Endothelial cell of umbilical vein (primary cell): ENCODE measurements at regions of chr1 and their contacts with region 1.

Region 1: DNA sequence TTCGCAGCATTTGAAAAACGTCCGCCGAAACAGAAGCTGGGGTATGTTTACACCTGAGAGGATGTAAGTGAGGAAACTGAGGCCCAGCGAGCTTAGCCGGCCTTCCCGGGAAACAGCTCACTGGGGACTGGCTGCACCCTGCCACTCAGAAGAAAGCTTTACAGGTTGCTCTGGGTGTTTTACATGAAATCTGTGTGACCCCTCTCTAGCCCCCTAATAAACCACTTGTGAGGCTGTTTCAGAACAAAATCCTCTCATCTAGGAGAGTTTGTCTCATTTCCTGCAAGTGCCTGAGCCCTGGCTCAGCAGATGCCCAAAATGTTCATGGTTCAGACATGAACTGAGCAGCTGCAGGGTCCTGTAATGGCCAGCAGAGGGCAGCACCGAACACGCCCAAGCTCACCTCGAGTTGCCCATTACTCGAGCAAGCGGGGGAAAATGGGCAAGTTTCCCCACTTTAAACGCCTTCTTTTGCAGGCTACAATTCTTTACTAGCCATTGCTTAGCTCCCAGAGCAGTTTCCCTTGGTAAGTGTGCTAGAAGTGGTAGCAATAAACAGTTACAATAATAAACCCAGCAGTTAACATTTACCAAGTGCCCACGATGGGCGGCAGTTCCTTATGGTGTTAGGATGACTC is 76.4 kb downstream of the FHAD1 start:
- DNase-seq: peak; percentile 73
- H3K4me3 ChIP-seq: no peak overlapping the region
- H3K27ac ChIP-seq: no peak overlapping the region
- H3K4me1 ChIP-seq: peaks cover 5% of the 10 kb centered on the region
- H3K27me3 ChIP-seq: no peaks in the 10 kb centered on the region
- CTCF ChIP-seq: peak; percentile 97 to 98
- POLR2A ChIP-seq: no peak

Region 2: DNA sequence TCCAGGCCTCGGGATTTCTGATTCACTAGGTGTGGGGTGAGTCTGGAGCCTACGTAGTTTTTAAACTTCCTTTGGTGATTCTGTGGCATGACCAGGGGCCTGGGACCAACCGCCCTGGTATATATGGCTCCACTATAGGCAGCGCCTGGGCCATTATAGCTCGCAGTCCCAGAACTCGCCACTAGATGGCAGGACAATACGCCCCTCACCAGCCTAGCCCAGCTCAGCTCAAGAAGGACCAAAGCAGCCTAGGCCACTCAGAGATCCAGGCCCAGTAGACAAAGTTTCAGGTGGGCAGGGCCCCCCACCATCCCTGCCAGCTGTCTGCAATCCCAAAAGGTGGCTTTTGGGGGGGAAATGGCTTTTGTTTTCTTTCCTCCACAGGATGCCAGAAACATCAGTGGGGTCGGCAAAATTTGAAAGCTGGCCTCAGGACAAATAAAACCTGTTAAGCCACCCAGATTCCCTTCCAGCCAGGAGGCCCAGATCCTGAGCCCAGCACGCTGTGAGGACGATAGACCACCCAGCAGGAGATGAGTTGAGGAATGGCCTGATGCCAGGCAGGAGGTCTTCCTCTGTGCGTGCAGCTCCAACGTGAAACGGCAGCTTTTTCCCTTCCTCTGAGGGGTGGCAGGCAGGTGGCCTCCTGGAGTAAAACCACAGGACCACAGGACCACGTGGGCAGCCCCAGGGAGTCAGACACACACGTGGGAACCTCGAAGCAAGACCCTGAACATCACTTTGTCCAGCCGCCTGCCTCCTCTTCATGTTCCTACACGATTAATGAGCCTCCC is 194.8 kb before region 1 on chr1:
- CTCF ChIA-PET with region 1: interaction called, 14 read pairs
- POLR2A ChIA-PET with region 1: no interaction called
- dilution Hi-C with region 1: no loop called
- intact Hi-C with region 1: no loop called
- DNase-seq: peak; percentile 78
- H3K4me3 ChIP-seq: no peak overlapping the region
- H3K27ac ChIP-seq: no peak overlapping the region
- H3K4me1 ChIP-seq: no peaks in the 10 kb centered on the region
- H3K27me3 ChIP-seq: no peaks in the 10 kb centered on the region
- CTCF ChIP-seq: peak; percentile 92
- POLR2A ChIP-seq: no peak

Region 3: DNA sequence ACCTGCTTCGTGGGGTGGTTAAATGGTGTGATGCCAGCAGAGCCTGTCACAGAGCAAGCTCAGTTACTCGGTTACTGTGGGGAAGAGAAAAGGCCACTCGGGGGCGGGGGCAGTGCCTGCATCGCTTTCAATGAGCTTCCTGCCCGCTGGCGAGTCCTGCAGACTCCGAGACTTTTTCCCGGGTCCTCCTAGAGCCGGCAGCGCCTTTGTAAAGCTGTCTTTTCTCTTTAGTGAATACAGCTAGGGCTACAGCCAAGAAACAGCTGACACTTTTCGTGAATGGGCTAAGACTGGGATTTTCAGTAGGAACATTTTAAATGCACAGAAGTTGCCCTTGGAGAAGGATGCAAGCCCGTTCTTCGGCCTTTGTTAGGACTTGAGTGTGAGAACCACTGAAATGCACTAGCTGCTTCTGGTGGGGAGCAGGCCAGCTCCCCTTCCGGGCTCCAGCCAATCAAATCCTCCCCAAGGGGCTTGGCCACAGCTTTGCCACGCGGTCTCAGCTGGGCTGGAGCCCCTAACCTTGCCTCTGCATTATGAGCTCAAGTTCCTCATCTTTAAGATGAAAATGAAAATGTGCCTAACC is 62.8 kb after region 1 on chr1:
- CTCF ChIA-PET with region 1: interaction called, 13 read pairs
- POLR2A ChIA-PET with region 1: no interaction called
- dilution Hi-C with region 1: no loop called
- intact Hi-C with region 1: no loop called
- DNase-seq: no peak
- H3K4me3 ChIP-seq: no peak overlapping the region
- H3K27ac ChIP-seq: no peak overlapping the region
- H3K4me1 ChIP-seq: no peaks in the 10 kb centered on the region
- H3K27me3 ChIP-seq: peaks cover 0 to 3% of the 10 kb centered on the region in 2 experiments
- CTCF ChIP-seq: no peak
- POLR2A ChIP-seq: no peak

Region 4: GRCh38 chr1:15417365-15417934 is 94.0 kb after region 1 on chr1:
- CTCF ChIA-PET with region 1: interaction called, 31 read pairs
- POLR2A ChIA-PET with region 1: interaction called, 4 read pairs
- dilution Hi-C with region 1: loop called (anchors 10 kb)
- intact Hi-C with region 1: loop called (anchors 1 kb)
- DNase-seq: peak; percentile 78
- H3K4me3 ChIP-seq: no peak overlapping the region
- H3K27ac ChIP-seq: peak overlapping the region; percentile 48
- H3K4me1 ChIP-seq: peaks cover 56% of the 10 kb centered on the region
- H3K27me3 ChIP-seq: no peaks in the 10 kb centered on the region
- CTCF ChIP-seq: no peak
- POLR2A ChIP-seq: peak; percentile 48

Region 5: GRCh38 chr1:15436881-15437442 is 113.5 kb after region 1 on chr1:
- CTCF ChIA-PET with region 1: interaction called, 332 read pairs
- POLR2A ChIA-PET with region 1: no interaction called
- dilution Hi-C with region 1: no loop called
- intact Hi-C with region 1: no loop called
- DNase-seq: no peak
- H3K4me3 ChIP-seq: no peak overlapping the region
- H3K27ac ChIP-seq: no peak overlapping the region
- H3K4me1 ChIP-seq: no peaks in the 10 kb centered on the region
- H3K27me3 ChIP-seq: no peaks in the 10 kb centered on the region
- CTCF ChIP-seq: no peak
- POLR2A ChIP-seq: no peak

Region 6: DNA sequence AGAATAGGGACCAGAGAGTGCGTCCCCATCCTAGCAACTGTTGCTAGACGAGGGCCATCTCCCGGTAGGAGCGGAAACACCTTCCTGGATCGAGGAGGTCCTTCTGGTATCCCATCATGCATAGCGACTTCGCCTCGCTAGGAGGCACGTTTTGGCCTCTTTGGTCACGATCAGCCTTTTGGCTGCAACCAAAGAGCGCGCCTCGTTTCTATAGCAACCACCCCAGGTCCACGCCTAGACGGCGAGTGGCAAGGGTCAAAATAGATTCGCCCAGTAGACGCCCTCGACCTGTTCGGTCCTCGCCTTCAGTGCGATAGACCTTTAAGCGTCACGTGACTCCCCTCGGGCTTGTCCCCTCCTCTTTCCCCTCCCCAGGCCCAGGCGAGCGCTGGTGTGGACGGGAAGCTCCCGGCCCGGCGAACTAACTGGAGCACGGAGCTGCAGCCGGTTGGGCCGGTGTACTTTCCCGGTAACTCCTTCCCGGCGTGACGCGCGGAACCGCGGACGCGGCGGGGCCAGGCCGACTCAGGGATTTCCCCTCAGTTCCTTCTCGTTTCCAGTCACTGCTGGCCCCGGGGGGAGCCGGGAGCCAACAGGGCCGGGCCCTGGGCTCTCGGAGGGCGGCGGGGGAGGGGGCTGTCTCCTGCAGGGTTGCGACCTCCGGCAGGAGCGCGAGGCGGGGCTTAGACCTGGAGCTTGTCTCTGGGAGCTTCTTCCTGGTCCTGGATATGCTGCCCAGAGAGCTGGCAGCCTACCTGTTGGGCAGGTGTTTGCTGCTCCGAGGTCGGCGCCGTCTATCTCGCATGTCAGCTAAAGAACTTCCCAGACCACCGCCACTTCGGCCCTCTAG is 203.2 kb after region 1 on chr1 and contains the start of gene DNAJC16:
- CTCF ChIA-PET with region 1: interaction called, 7 read pairs
- POLR2A ChIA-PET with region 1: no interaction called
- dilution Hi-C with region 1: no loop called
- intact Hi-C with region 1: loop called (anchors 1 kb)
- DNase-seq: peak; percentile 100
- H3K4me3 ChIP-seq: peak within 1 kb of the TSS; percentile 52 to 87 (median 74)
- H3K27ac ChIP-seq: peak within 1 kb of the TSS; percentile 44
- H3K4me1 ChIP-seq: peaks cover 24% of the 10 kb centered on the region
- H3K27me3 ChIP-seq: no peaks in the 10 kb centered on the region
- CTCF ChIP-seq: peak in 1 of 2 donors; percentile 4
- POLR2A ChIP-seq: peak; percentile 90
- total RNA-seq, gene DNAJC16: 21.4 and 23.3 TPM in 2 replicates